ENCODE measurements at regions of chrX and their contacts with region 1.

Region 1: DNA sequence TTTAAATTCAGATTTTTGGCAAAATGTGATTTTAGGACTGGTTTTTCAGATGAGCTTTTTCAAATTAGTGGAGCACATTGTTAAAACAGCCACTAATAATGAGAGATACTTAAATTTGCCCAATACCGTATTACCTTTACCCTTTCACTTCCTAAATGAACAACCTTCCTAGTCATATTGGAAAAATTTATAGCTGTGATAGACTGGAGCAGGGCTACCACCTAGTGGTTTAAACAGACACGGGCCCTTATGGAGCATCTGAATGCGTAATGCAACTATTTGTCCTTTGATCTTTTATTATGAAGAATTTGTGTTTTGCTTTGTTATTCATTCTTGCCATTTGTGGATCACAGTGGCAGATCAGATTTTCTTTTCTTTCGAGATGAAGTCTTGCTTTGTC is 72.7 kb downstream of the KDM6A start:
- DNase-seq: no peak

Region 2: DNA sequence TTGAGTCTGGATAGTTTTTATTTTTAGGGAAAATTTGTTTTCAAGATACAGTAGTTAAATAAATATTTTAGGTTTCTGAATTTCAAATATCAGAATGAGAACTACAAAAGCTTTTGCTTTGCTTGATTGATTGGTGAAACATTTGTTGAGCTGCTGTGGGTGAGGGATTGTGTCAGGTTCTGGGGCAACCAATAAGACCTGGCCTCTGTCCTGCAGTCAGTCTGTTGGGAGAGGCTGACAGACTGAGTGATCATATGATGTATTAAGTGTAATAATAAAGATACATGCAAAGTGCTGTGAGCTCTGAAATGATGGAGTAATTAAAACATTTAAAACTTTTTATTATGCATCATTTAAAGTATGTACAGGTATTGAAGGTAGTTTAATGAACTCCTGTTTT is 63.1 kb before region 1 on chrX:
- intact Hi-C with region 1: loop called in 1 of 2 experiments (anchors 2 kb)
- DNase-seq: no peak

Region 3: GRCh38 chrX:44898411-44899221 is 47.1 kb before region 1 on chrX:
- intact Hi-C with region 1: no loop called
- DNase-seq: no peak

Region 4: DNA sequence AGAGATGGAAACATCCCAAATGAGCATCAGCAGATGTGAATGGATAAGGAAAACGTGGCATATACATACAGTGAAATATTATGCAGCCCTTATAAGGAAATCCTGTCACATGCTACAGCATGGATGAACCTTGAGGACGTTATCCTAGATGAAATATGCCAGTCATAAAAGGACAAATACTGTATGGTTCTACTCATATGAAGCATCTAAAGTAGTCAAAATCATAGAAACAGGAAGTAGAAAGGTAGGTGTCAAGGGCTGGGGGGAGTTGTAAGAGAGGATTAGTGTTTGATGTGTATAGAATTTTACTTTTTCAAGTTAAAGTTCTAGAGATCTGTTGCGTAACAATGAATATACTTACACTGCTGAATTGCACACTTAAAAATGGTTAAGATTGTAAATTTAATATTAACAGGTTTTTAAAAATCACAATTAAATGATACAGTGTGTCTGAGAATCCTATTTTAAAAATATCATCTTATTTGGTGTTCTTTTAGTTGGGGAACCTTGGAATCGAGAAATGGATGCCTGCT is 14.2 kb before region 1 on chrX:
- intact Hi-C with region 1: no loop called
- DNase-seq: no peak